ENCODE measurements at regions of chr2 and their contacts with region 1.

Region 1: DNA sequence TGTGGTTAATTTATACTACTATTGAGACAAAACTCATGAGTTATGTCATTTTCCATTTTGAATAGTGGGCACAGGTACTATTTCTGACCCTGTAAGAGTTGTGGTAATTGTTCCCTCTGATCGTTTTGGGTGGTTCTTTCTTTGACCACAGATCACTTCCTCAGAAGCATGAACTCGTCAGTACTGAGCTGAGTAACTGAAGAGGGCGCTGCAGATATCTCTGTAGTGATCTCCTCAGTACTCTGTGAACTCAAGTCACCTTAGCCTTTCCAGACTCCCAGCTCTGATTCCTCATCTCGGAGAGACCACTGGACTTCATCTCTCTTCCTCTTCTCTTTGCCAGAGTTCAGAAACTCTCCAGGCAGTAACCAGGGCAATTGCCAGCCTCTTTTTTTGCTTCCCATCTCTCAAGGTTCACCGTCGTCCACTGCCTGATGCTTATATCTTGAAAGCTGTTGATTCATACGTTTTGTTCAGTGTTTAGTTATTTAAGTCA is 9.4 kb upstream of the IL1RL1 start:
- DNase-seq: peak; percentile 47
- H3K4me3 Mint-ChIP-seq: peak overlapping the region; percentile 43
- H3K27ac Mint-ChIP-seq: peak overlapping the region; percentile 87
- H3K4me1 Mint-ChIP-seq: peaks cover 67% of the 10 kb centered on the region
- H3K27me3 Mint-ChIP-seq: peaks cover 2% of the 10 kb centered on the region

Region 2: GRCh38 chr2:102251042-102251848 is 50.7 kb before region 1 on chr2:
- intact Hi-C with region 1: loop called (anchors 1 kb)
- DNase-seq: peak; percentile 49
- H3K4me3 Mint-ChIP-seq: peak overlapping the region; percentile 72
- H3K27ac Mint-ChIP-seq: peak overlapping the region; percentile 71
- H3K4me1 Mint-ChIP-seq: peaks cover 44% of the 10 kb centered on the region
- H3K27me3 Mint-ChIP-seq: peaks cover 4% of the 10 kb centered on the region

Region 3: DNA sequence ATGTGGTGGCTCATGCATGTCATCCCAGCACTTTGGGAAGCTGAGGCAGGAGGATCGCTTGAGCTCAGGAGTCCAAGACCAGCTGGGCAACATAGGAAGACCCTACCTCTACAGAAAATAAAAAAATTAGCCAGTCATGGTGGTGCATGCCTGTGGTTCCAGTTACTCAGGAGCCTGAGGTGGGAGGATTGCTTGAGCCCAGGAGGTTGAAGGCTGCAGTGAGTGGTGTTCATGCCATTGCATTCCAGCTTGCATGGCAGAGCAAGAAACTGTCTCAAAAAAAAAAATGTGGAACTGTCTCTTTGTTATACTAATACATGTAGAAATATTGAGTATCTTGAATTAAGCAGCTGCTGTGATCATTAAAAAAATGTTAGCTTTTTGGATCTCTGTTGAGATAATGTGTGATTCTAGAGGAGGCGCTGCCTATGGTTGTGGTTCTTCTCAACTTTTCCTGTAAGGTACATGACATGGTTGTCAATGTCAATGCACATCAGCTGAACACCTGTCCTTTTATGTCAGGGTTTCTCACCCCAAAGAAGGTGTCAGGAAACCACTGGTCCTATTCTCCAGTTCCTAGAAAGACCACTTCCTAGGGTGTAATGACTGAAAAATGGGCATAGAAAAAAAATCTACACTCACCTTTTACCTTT is 25.2 kb before region 1 on chr2:
- intact Hi-C with region 1: loop called (anchors 2 kb)
- DNase-seq: no peak
- H3K4me3 Mint-ChIP-seq: peak overlapping the region; percentile 54
- H3K27ac Mint-ChIP-seq: peak overlapping the region; percentile 73
- H3K4me1 Mint-ChIP-seq: peaks cover 71% of the 10 kb centered on the region
- H3K27me3 Mint-ChIP-seq: no peaks in the 10 kb centered on the region

Region 4: GRCh38 chr2:102336502-102336945 is 34.6 kb after region 1 on chr2:
- intact Hi-C with region 1: loop called (anchors 5 kb)
- DNase-seq: no peak
- H3K4me3 Mint-ChIP-seq: no peak overlapping the region
- H3K27ac Mint-ChIP-seq: no peak overlapping the region
- H3K4me1 Mint-ChIP-seq: peaks cover 21% of the 10 kb centered on the region
- H3K27me3 Mint-ChIP-seq: no peaks in the 10 kb centered on the region

Region 5: GRCh38 chr2:102366406-102367112 is 64.6 kb after region 1 on chr2:
- intact Hi-C with region 1: loop called (anchors 2 kb)
- DNase-seq: no peak
- H3K4me3 Mint-ChIP-seq: peak overlapping the region; percentile 79
- H3K27ac Mint-ChIP-seq: peak overlapping the region; percentile 97
- H3K4me1 Mint-ChIP-seq: peaks cover 97% of the 10 kb centered on the region
- H3K27me3 Mint-ChIP-seq: no peaks in the 10 kb centered on the region

Region 6: GRCh38 chr2:102436323-102436722 is 134.4 kb after region 1 on chr2:
- intact Hi-C with region 1: loop called (anchors 1 kb)
- DNase-seq: no peak
- H3K4me3 Mint-ChIP-seq: peak overlapping the region; percentile 53
- H3K27ac Mint-ChIP-seq: peak overlapping the region; percentile 86
- H3K4me1 Mint-ChIP-seq: peaks cover 33% of the 10 kb centered on the region
- H3K27me3 Mint-ChIP-seq: no peaks in the 10 kb centered on the region

Measured in activated T-helper 1 cell treated with anti-CD3 and anti-CD28 coated beads, Interleukin-12 subunit alpha, Interleukin-12 subunit beta, Interleukin-2, Interleukin-4 antibody, amounts not matched to agents 30 ng/mL and 10 ng/mL and 1 ng/mL, durations not matched to agents 14 hours and 24 hours and 36 hours (primary cell).